ENCODE measurements at regions of chr10 and their contacts with region 1.

Region 1: GRCh38 chr10:13299437-13300287 is at the start of gene PHYH:
- DNase-seq: peak; percentile 98
- H3K4me3 ChIP-seq: peak within 1 kb of the TSS; percentile 63 to 90 (median 69)
- H3K27ac ChIP-seq: peak within 1 kb of the TSS; percentile 93 to 98 (median 95)
- H3K4me1 ChIP-seq: peaks cover 14 to 43% (median 32%) of the 10 kb centered on the region in 6 donors
- H3K27me3 ChIP-seq: no peaks in the 10 kb centered on the region
- CTCF ChIP-seq: peak in 2 of 11 experiments; percentile 13 to 26
- POLR2A ChIP-seq: peak in 1 of 3 donors; percentile 63
- total RNA-seq, gene PHYH: 9.8 to 30.5 (median 14.7) TPM

Region 2: GRCh38 chr10:13160934-13161856 is 138.5 kb before region 1 on chr10 and contains the start of gene MCM10:
- intact Hi-C with region 1: loop called (anchors 10 kb)
- DNase-seq: peak; percentile 98
- H3K4me3 ChIP-seq: peak within 1 kb of the TSS; percentile 46 to 83 (median 56)
- H3K27ac ChIP-seq: peak within 1 kb of the TSS in 4 of 8 donors; percentile 0 to 48 (median 27)
- H3K4me1 ChIP-seq: peaks cover 0 to 23% (median 18%) of the 10 kb centered on the region in 6 donors
- H3K27me3 ChIP-seq: no peaks in the 10 kb centered on the region
- CTCF ChIP-seq: peak; percentile 65 to 95 (median 87)
- POLR2A ChIP-seq: no peak
- total RNA-seq, gene MCM10: 0.98 to 5.3 (median 2.8) TPM